ENCODE measurements at regions of chr9 and their contacts with region 1.

Region 1: DNA sequence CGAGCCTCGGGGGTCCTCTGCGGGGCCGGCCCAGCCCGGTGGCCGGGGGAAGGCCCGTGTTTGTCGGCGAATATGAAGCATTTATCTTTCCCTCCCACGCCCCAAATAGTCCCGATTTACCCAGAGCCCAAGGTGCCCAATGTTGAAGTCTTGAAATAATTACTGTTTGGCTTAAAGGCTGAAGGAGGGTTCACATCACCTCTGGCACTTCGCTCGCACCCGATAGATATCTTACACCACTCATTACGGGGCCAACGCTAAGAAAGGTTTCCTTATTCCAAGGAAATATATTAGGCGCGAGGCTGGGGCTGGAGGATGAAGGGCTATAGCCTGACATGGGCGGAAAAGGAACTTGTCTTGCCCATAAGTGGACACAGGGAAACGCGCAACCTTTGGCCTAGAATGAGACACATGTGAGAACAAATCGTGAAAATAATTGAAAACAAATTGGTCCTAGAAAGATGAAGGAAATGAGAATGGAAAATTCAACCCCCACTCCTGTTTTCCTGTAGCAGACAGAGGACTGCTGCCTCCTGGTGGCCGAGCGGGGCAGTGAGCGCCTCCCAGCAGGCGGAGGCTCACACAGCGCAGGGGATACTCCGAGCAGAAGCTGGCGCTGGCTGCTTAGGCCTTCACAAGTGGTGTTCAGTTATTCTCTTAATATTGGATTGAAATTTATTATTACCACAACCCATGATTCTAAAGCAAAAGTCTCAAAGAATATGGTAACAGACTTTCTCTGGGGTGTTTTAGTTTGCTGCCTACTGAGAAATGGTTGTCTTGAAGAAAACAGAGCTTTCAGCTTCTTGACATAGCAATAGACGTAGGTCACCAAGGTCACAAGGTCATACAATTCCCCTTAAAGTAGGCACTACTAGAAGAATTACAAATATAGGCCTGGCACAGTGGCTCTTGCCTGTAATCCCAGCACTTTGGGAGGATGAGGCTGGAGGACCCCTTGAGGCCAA is 7.9 kb downstream of the CCL21 start:
- DNase-seq: peak; percentile 93
- H3K4me3 ChIP-seq: peak overlapping the region; percentile 72 to 92 (median 76)
- H3K27ac ChIP-seq: peak overlapping the region; percentile 80 to 90 (median 86)
- H3K4me1 ChIP-seq: peaks cover 4 to 20% (median 11%) of the 10 kb centered on the region in 4 donors
- H3K27me3 ChIP-seq: no peaks in the 10 kb centered on the region
- CTCF ChIP-seq: peak; percentile 97 to 99 (median 98)
- EP300 ChIP-seq: no peak
- POLR2A ChIP-seq: no peak

Region 2: GRCh38 chr9:34611829-34612630 is 90.0 kb before region 1 on chr9 and contains the start of gene RPP25L:
- intact Hi-C with region 1: loop called (anchors 2 kb)
- DNase-seq: no peak
- H3K4me3 ChIP-seq: peak within 1 kb of the TSS; percentile 71 to 74 (median 72)
- H3K27ac ChIP-seq: peak within 1 kb of the TSS; percentile 84 to 87 (median 85)
- H3K4me1 ChIP-seq: peaks cover 18 to 29% (median 27%) of the 10 kb centered on the region in 4 donors
- H3K27me3 ChIP-seq: no peaks in the 10 kb centered on the region
- CTCF ChIP-seq: no peak
- EP300 ChIP-seq: no peak
- POLR2A ChIP-seq: peak; percentile 61
- total RNA-seq, gene RPP25L: 11.6 to 26.7 (median 20.2) TPM

Region 3: GRCh38 chr9:34633851-34634550 is 68.1 kb before region 1 on chr9:
- intact Hi-C with region 1: loop called (anchors 5 kb)
- DNase-seq: no peak
- H3K4me3 ChIP-seq: no peak overlapping the region
- H3K27ac ChIP-seq: no peak overlapping the region
- H3K4me1 ChIP-seq: peaks cover 23 to 42% (median 40%) of the 10 kb centered on the region in 4 donors
- H3K27me3 ChIP-seq: peaks cover 0 to 16% (median 6%) of the 10 kb centered on the region in 4 donors
- CTCF ChIP-seq: peak; percentile 82 to 84 (median 84)
- EP300 ChIP-seq: no peak
- POLR2A ChIP-seq: no peak

Region 4: GRCh38 chr9:34665381-34666250 is 36.4 kb before region 1 on chr9:
- intact Hi-C with region 1: loop called (anchors 5 kb)
- DNase-seq: peak; percentile 98
- H3K4me3 ChIP-seq: peak overlapping the region; percentile 72 to 82 (median 76)
- H3K27ac ChIP-seq: peak overlapping the region; percentile 98 to 100 (median 98)
- H3K4me1 ChIP-seq: peaks cover 21 to 38% (median 30%) of the 10 kb centered on the region in 4 donors
- H3K27me3 ChIP-seq: no peaks in the 10 kb centered on the region
- CTCF ChIP-seq: no peak
- EP300 ChIP-seq: no peak
- POLR2A ChIP-seq: peak; percentile 90

Region 5: GRCh38 chr9:34989003-34989945 is 287.2 kb after region 1 on chr9 and contains the start of gene DNAJB5:
- intact Hi-C with region 1: loop called (anchors 10 kb)
- DNase-seq: peak; percentile 100
- H3K4me3 ChIP-seq: peak within 1 kb of the TSS; percentile 89 to 93 (median 92)
- H3K27ac ChIP-seq: peak within 1 kb of the TSS in 2 of 4 donors; percentile 98 to 99
- H3K4me1 ChIP-seq: peaks cover 44 to 53% (median 52%) of the 10 kb centered on the region in 4 donors
- H3K27me3 ChIP-seq: no peaks in the 10 kb centered on the region
- CTCF ChIP-seq: peak in 1 of 3 experiments; percentile 13
- EP300 ChIP-seq: peak; percentile 27
- POLR2A ChIP-seq: peak; percentile 97
- total RNA-seq, gene DNAJB5: 83.5 to 124 (median 93.8) TPM

Region 6: DNA sequence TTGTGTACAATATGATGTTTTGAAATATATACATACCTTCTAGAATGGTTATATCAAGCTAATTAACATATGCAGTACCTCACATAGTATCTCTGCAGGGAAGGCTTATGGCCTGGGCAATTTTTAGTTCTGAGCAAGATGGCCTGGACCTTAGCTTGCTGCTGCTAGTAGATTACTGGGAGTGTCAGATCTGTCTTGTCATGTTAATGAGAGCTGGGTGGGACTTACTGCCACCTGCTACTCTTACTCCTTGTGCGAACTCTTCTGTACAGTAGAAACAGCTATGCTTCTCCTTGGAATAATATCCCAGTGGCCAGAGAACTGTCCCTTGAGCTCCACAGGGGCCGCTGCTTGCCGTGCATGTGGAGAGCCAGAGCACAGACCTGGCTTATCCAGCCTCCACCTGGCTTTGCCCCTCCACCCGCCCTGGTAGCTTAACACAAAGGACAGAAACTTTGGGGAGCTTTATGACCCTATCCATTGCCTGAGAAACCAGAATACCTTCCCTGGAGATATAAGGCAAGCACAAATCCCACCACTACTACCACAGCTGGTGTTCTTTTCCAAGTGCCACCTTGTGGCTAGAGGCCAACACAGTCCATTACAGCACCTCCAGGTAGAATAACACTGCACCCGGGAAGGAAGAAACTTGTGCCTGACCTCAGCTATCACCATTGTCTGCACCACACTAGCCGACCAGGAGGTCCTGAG is 713.5 kb after region 1 on chr9:
- intact Hi-C with region 1: no loop called
- DNase-seq: no peak
- H3K4me3 ChIP-seq: no peak overlapping the region
- H3K27ac ChIP-seq: no peak overlapping the region
- H3K4me1 ChIP-seq: no peaks in the 10 kb centered on the region
- H3K27me3 ChIP-seq: no peaks in the 10 kb centered on the region
- CTCF ChIP-seq: no peak
- EP300 ChIP-seq: no peak
- POLR2A ChIP-seq: no peak

Measured in esophagus muscularis mucosa (tissue), 4 donors.